ENCODE measurements at regions of chr2 and their contacts with region 1.

Region 1: DNA sequence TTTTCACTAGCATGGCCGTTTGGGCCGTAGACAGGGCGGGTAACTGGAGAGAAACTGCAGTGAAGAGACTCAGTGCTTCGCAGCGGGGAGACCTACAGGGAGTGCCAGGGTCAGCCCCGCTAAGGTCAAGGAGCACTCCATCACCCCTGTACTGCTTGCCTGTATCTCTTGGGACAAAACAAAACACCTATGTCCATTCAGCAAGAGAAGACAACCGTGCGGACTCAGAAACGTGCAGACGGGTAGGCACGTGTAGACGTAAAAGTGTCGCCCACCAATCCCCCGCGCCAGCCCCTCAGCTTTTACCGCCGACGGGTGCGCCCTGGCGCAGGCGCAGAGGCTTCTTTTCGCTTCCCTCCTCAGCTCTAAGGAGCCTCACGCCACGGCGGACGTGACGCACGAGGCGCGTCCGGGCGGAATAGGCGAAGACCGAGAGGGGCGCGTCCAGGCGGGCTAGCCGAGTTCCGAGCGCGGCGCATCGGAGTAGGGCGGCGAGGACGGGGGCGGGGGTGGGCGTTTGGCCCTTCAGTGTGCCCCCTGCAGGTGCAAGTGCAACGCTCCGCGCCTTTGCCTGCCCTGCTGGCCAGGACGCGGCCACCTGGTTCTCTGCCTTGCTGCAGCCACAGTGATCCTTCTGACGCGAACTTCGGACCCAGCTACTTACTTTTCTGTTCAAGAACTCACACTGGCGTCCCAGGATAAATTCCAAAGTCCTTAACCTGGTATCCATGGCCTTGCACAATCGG is 3.3 kb upstream of the SOS1 start:
- DNase-seq: peak; percentile 96
- H3K4me3 ChIP-seq: peak overlapping the region; percentile 29 to 57 (median 43)
- H3K27ac ChIP-seq: peak overlapping the region; percentile 72 to 88 (median 84)
- H3K4me1 ChIP-seq: peaks cover 17 to 29% of the 10 kb centered on the region in 2 donors
- H3K27me3 ChIP-seq: no peaks in the 10 kb centered on the region
- CTCF ChIP-seq: peak in 5 of 6 experiments; percentile 17 to 54 (median 28)
- POLR2A ChIP-seq: peak in 1 of 2 donors; percentile 87

Region 2: DNA sequence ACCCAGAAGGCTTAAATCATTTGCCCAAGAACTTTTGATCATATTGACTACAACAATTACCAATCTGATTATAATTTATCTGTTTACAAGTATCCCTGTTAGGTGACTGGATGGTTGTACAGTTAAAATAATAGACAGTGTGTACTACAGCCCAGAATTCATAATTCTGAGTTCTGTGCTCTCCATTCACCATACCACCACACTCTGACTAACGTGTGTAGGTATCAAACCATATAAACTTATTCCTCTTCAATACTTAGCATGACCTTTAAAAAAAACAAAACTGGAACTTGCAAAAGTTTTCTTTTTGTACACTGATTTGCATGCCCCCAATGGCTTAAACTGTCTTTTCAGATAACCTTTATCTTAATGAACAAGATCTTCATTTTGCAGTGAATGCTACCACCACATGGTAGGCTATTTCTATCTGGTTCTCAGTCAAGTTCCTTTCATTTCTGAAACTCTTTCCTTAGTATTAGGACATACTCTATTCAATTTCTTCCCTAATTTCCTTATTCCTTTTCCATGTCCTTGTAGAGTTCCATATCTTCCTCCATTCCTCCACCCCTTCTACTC is 54.2 kb before region 1 on chr2:
- intact Hi-C with region 1: loop called (anchors 10 kb)
- DNase-seq: no peak
- H3K4me3 ChIP-seq: no peak overlapping the region
- H3K27ac ChIP-seq: no peak overlapping the region
- H3K4me1 ChIP-seq: peaks cover 0 to 6% of the 10 kb centered on the region in 2 donors
- H3K27me3 ChIP-seq: no peaks in the 10 kb centered on the region
- CTCF ChIP-seq: no peak
- POLR2A ChIP-seq: no peak